B cell (primary cell): ENCODE measurements at regions of chr18 and their contacts with region 1.

Region 1: DNA sequence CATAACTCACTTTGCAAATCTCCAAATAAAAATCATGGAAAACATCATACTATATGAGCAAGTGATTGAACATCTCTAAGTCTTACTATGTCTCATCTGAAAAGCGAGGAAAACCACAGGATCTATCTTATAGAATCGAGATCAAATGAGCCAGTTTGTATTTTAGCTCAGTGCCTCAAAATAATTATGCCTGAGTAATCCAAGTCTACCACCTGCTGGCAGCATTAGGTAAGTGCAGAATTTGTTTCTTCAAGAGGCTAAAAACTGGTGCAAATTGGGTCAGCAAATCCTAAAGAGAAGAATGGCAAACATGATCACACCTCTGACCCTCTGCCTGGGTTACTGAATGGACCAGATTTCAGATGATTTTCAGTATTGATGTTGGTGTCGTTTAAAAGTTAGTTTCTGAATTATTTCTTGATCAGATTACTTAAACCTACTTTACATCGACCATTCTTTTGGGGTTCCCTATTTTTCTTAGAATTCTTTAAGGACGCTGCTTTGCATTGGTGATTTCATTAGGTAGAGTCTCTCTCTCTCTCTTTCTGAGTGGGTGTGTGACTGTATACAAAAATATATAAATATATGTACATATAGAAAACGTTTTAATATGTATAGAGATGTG is 12.7 kb upstream of the FHOD3 start:
- DNase-seq: peak; percentile 77
- ATAC-seq: peak; percentile 70
- H3K4me3 ChIP-seq: no peak overlapping the region
- H3K4me3 Mint-ChIP-seq: no peak overlapping the region
- H3K27ac ChIP-seq: no peak overlapping the region
- H3K27ac Mint-ChIP-seq: no peak overlapping the region
- H3K4me1 ChIP-seq: no peaks in the 10 kb centered on the region
- H3K4me1 Mint-ChIP-seq: peaks cover 2% of the 10 kb centered on the region
- H3K27me3 ChIP-seq: peaks cover 0 to 13% (median 7%) of the 10 kb centered on the region in 4 experiments
- H3K27me3 Mint-ChIP-seq: peaks cover 48% of the 10 kb centered on the region
- CTCF ChIP-seq: peak; percentile 96

Region 2: DNA sequence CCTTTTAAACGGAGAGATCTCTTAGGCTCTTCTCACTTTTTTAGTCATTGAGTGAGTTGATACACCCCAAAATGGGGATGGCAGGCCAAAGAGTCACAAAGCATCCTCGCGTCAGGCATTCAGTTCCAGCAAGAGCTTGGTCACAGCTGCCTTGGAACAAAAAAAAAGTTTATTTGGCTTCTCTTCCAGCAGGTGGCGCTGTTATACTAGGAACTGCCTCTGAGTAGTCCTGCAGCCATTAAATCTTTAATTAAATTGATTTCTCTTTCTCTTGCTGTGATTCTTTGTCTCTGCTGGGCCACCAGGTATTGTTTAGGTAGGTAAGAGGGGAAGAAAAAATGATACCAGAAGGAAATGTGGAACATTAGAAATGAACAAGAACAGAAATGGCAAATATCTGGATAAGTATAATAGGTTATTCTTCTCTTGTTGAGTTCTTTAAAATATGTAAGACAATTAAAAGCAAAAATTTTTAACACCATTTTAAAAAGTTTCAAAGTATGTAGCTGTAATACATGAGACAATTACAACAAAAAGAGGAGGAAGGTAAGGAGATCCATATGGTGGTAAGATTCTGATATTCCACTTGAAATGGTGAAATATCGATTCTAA is 528.2 kb before region 1 on chr18:
- CTCF ChIA-PET with region 1: interaction called, 68 read pairs
- POLR2A ChIA-PET with region 1: no interaction called
- intact Hi-C with region 1: no loop called
- DNase-seq: peak; percentile 75
- ATAC-seq: peak; percentile 63
- H3K4me3 ChIP-seq: no peak overlapping the region
- H3K4me3 Mint-ChIP-seq: no peak overlapping the region
- H3K27ac ChIP-seq: no peak overlapping the region
- H3K27ac Mint-ChIP-seq: no peak overlapping the region
- H3K4me1 ChIP-seq: no peaks in the 10 kb centered on the region
- H3K4me1 Mint-ChIP-seq: peaks cover 2% of the 10 kb centered on the region
- H3K27me3 ChIP-seq: peaks cover 0 to 11% (median 6%) of the 10 kb centered on the region in 4 experiments
- H3K27me3 Mint-ChIP-seq: peaks cover 27% of the 10 kb centered on the region
- CTCF ChIP-seq: peak; percentile 99

Region 3: GRCh38 chr18:36015629-36016028 is 269.2 kb before region 1 on chr18:
- CTCF ChIA-PET with region 1: interaction called, 175 read pairs
- POLR2A ChIA-PET with region 1: interaction called, 3 read pairs
- intact Hi-C with region 1: loop called (anchors 1 kb)
- DNase-seq: peak; percentile 71
- ATAC-seq: peak; percentile 76
- H3K4me3 ChIP-seq: no peak overlapping the region
- H3K4me3 Mint-ChIP-seq: peak overlapping the region; percentile 3
- H3K27ac ChIP-seq: no peak overlapping the region
- H3K27ac Mint-ChIP-seq: peak overlapping the region; percentile 12
- H3K4me1 ChIP-seq: peaks cover 13 to 19% of the 10 kb centered on the region in 2 donors
- H3K4me1 Mint-ChIP-seq: peaks cover 24% of the 10 kb centered on the region
- H3K27me3 ChIP-seq: no peaks in the 10 kb centered on the region
- H3K27me3 Mint-ChIP-seq: no peaks in the 10 kb centered on the region
- CTCF ChIP-seq: no peak

Region 4: DNA sequence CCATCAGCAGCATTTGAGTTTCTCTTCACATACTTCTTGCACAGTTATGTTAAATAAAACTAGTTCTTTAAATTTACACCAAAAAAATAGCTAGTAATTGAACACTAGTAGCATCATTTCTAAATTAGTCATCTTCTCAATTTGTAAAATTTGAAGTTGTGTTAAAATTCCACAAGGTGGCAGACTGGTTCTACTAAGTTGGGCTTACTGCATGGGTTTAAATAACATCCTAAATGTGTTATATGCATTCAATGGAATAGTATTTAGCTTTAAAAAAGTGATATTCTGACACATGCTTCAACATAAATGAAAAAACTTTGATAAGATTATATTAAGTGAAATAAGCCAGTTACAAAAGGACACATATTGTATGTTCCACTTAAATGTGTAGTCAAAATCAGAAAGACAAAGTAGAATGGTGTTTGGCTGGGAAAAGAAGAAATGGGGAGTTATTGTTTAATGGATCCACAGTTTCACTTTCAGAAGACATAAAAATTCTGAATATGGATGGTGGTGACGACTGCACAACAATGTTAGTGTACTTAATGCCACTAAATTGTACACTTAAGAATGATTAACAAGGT is 188.8 kb before region 1 on chr18:
- CTCF ChIA-PET with region 1: interaction called, 213 read pairs
- POLR2A ChIA-PET with region 1: no interaction called
- intact Hi-C with region 1: loop called (anchors 1 kb)
- DNase-seq: peak; percentile 65
- ATAC-seq: peak; percentile 43
- H3K4me3 ChIP-seq: no peak overlapping the region
- H3K4me3 Mint-ChIP-seq: no peak overlapping the region
- H3K27ac ChIP-seq: no peak overlapping the region
- H3K27ac Mint-ChIP-seq: no peak overlapping the region
- H3K4me1 ChIP-seq: no peaks in the 10 kb centered on the region
- H3K4me1 Mint-ChIP-seq: no peaks in the 10 kb centered on the region
- H3K27me3 ChIP-seq: no peaks in the 10 kb centered on the region
- H3K27me3 Mint-ChIP-seq: peaks cover 7% of the 10 kb centered on the region
- CTCF ChIP-seq: peak; percentile 80

Region 5: GRCh38 chr18:36274083-36274715 is 10.6 kb before region 1 on chr18:
- CTCF ChIA-PET with region 1: interaction called, 14 read pairs
- POLR2A ChIA-PET with region 1: no interaction called
- intact Hi-C with region 1: no loop called
- DNase-seq: no peak
- ATAC-seq: no peak
- H3K4me3 ChIP-seq: no peak overlapping the region
- H3K4me3 Mint-ChIP-seq: no peak overlapping the region
- H3K27ac ChIP-seq: no peak overlapping the region
- H3K27ac Mint-ChIP-seq: no peak overlapping the region
- H3K4me1 ChIP-seq: no peaks in the 10 kb centered on the region
- H3K4me1 Mint-ChIP-seq: no peaks in the 10 kb centered on the region
- H3K27me3 ChIP-seq: peaks cover 0 to 10% (median 8%) of the 10 kb centered on the region in 4 experiments
- H3K27me3 Mint-ChIP-seq: peaks cover 48% of the 10 kb centered on the region
- CTCF ChIP-seq: no peak

Region 6: DNA sequence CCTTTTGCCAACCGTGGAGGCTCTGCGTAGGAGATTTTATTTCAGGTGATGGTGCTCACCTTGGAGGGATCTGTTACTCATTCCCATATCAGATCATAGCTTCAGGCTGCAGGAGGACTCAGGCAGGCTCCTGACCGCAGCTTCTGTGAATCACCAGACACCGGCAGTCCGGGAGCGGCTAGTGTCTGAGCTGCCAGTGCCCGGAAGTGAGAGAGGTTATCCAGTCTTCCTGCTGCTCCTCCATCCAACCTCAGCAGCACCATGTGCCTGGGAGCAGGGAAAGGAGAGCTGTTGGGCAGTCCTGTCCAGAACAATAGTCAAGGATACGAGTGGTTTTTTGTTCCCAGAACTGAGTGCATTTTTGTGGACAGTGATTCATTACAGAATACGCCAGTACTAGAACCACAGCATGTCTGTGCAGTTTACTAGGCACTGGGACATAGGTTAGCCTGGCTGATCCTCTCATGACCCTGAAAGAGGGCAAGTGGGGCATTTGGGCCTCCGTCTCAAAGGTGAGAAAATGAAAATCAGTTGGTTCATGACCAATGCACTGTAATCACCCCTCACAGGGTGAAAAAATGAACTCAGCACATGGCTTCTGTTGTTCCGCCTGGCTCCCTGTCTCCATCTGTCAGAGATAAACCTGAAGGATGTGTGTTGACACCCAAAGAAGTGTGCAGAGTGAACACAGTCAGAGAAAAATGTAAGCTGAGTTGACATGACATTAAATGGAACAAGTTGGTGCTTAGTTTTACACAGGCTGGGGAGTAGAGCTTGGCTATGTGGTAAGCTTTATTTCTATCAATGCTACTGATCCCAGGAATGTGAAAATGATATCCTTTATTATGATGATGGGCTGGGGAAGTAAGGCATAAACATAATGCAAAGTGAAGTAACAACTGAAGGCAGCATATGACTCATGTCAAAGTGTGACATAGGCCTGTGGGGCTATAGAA is 24.9 kb after region 1 on chr18:
- CTCF ChIA-PET with region 1: no interaction called
- POLR2A ChIA-PET with region 1: no interaction called
- intact Hi-C with region 1: no loop called
- DNase-seq: no peak
- ATAC-seq: no peak
- H3K4me3 ChIP-seq: no peak overlapping the region
- H3K4me3 Mint-ChIP-seq: no peak overlapping the region
- H3K27ac ChIP-seq: no peak overlapping the region
- H3K27ac Mint-ChIP-seq: no peak overlapping the region
- H3K4me1 ChIP-seq: no peaks in the 10 kb centered on the region
- H3K4me1 Mint-ChIP-seq: no peaks in the 10 kb centered on the region
- H3K27me3 ChIP-seq: peaks cover 0 to 12% (median 3%) of the 10 kb centered on the region in 4 experiments
- H3K27me3 Mint-ChIP-seq: peaks cover 72% of the 10 kb centered on the region
- CTCF ChIP-seq: no peak